ENCODE measurements at regions of chr7 and their contacts with region 1.

Region 1: GRCh38 chr7:36389371-36390198 is at the start of gene ANLN:
- DNase-seq: peak; percentile 97

Region 2: GRCh38 chr7:36366718-36367560 is 22.6 kb before region 1 on chr7:
- CTCF ChIA-PET with region 1: interaction called, 10 read pairs
- POLR2A ChIA-PET with region 1: interaction called, 33 read pairs
- DNase-seq: peak; percentile 94

Measured in HEK293T (cell line).